ENCODE measurements at regions of chr11 and their contacts with region 1.

Region 1: GRCh38 chr11:35165423-35166368 is 26.7 kb downstream of the CD44 start:
- DNase-seq: peak; percentile 72 to 81 (median 75)
- H3K4me3 ChIP-seq: peak overlapping the region in 2 of 3 experiments; percentile 11 to 56
- H3K4me3 Mint-ChIP-seq: peak overlapping the region; percentile 41 to 78
- H3K27ac ChIP-seq: peak overlapping the region; percentile 78 to 96
- H3K27ac Mint-ChIP-seq: peak overlapping the region; percentile 94 to 98 (median 96)
- H3K4me1 ChIP-seq: peaks cover 96 to 99% of the 10 kb centered on the region in 2 donors
- H3K4me1 Mint-ChIP-seq: peaks cover 94% of the 10 kb centered on the region
- H3K27me3 ChIP-seq: no peaks in the 10 kb centered on the region
- H3K27me3 Mint-ChIP-seq: no peaks in the 10 kb centered on the region
- CTCF ChIP-seq: no peak

Region 2: GRCh38 chr11:35214792-35215193 is 49.1 kb after region 1 on chr11:
- intact Hi-C with region 1: loop called in 1 of 2 experiments (anchors 10 kb)
- DNase-seq: peak; percentile 92 to 98 (median 93)
- H3K4me3 ChIP-seq: peak overlapping the region in 1 of 3 experiments; percentile 30
- H3K4me3 Mint-ChIP-seq: peak overlapping the region in 1 of 2 donors; percentile 35
- H3K27ac ChIP-seq: peak overlapping the region; percentile 16 to 97
- H3K27ac Mint-ChIP-seq: peak overlapping the region; percentile 95 to 99 (median 98)
- H3K4me1 ChIP-seq: peaks cover 62 to 74% of the 10 kb centered on the region in 2 donors
- H3K4me1 Mint-ChIP-seq: peaks cover 71% of the 10 kb centered on the region
- H3K27me3 ChIP-seq: no peaks in the 10 kb centered on the region
- H3K27me3 Mint-ChIP-seq: no peaks in the 10 kb centered on the region
- CTCF ChIP-seq: no peak

Region 3: DNA sequence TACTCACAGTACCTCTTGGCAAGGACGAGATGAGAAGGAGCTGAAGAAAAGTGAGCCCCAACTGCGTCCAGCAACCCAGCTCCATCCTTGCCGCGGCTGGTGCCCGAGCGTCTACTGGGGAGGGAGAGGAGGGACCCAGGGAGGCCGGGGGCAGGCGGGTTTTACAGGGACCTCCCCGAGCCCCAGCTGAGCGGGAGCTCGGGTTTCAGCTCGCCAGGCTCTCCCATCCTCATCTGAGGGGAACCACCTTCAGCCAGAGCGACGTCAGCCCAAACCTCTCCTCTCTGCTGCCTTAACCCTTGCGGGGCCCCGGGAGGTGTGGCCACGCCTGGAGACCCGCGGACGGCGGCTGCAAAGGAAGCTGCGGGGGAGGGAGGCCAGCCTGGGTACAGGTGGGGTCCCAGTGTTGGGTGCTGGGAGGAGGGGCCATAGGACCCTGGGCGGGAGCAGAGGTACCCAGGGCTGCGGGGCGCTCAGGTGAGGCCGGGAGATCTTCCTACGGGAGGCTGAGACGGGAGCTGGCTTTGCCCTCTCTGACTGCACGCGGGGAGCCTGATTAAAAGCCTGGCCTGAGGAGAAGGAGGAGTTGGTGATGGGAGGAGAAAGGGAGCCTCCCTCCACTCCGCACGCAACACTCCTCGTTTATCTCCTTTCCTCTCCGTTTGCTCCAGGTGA is 359.9 kb after region 1 on chr11 and contains the start of gene PAMR1:
- intact Hi-C with region 1: no loop called
- DNase-seq: no peak
- H3K4me3 ChIP-seq: no peak within 1 kb of the TSS
- H3K4me3 Mint-ChIP-seq: peak within 1 kb of the TSS in 1 of 2 donors; percentile 59
- H3K27ac ChIP-seq: no peak within 1 kb of the TSS
- H3K27ac Mint-ChIP-seq: peak within 1 kb of the TSS in 1 of 7 donors; percentile 9
- H3K4me1 ChIP-seq: no peaks in the 10 kb centered on the region
- H3K4me1 Mint-ChIP-seq: no peaks in the 10 kb centered on the region
- H3K27me3 ChIP-seq: peaks cover 46 to 66% of the 10 kb centered on the region in 2 donors
- H3K27me3 Mint-ChIP-seq: peaks cover 55 to 83% (median 62%) of the 10 kb centered on the region in 3 donors
- CTCF ChIP-seq: no peak
- polyA plus RNA-seq, gene PAMR1: not detected

Measured in CD14-positive monocyte (primary cell).